BJ (cell line): ENCODE measurements at regions of chr17 and their contacts with region 1.

Region 1: GRCh38 chr17:32486111-32486700 is 587 bp upstream of the CDK5R1 start:
- DNase-seq: no peak
- H3K4me3 ChIP-seq: peak overlapping the region; percentile 51
- H3K27me3 ChIP-seq: no peaks in the 10 kb centered on the region
- CTCF ChIP-seq: no peak

Region 2: GRCh38 chr17:32461853-32462617 is 24.2 kb before region 1 on chr17:
- CTCF ChIA-PET with region 1: interaction called, 37 read pairs
- POLR2A ChIA-PET with region 1: no interaction called
- DNase-seq: no peak
- H3K4me3 ChIP-seq: no peak overlapping the region
- H3K27me3 ChIP-seq: no peaks in the 10 kb centered on the region
- CTCF ChIP-seq: peak; percentile 63

Region 3: GRCh38 chr17:32659419-32659842 is 173.2 kb after region 1 on chr17:
- CTCF ChIA-PET with region 1: interaction called, 13 read pairs
- POLR2A ChIA-PET with region 1: no interaction called
- DNase-seq: peak; percentile 12
- H3K4me3 ChIP-seq: no peak overlapping the region
- H3K27me3 ChIP-seq: no peaks in the 10 kb centered on the region
- CTCF ChIP-seq: peak; percentile 94

Region 4: GRCh38 chr17:32755045-32755805 is 269.0 kb after region 1 on chr17:
- CTCF ChIA-PET with region 1: interaction called, 16 read pairs
- POLR2A ChIA-PET with region 1: no interaction called
- DNase-seq: peak; percentile 27
- H3K4me3 ChIP-seq: no peak overlapping the region
- H3K27me3 ChIP-seq: no peaks in the 10 kb centered on the region; the same call in 1 of the 2 replicates
- CTCF ChIP-seq: peak; percentile 44

Region 5: DNA sequence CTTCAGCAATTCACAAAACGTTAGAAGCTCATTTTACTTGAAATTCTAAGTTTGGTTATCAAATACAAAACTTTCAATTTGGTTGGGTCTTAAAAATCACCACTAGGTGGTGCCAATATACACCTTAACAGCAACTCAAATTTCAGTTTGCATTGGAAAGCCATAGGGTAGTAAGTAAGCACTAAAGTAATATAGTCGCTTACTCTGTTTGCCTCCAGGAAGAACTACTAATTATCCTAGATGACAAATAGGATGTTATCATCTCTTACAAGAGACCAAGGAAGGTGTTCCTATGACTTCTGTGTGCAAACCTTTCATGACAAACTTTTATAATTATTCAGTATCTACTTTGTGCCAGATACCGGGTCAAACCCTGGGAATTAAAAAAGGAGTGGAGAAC is 297.4 kb after region 1 on chr17:
- CTCF ChIA-PET with region 1: interaction called, 12 read pairs
- POLR2A ChIA-PET with region 1: no interaction called
- DNase-seq: no peak
- H3K4me3 ChIP-seq: no peak overlapping the region
- H3K27me3 ChIP-seq: no peaks in the 10 kb centered on the region
- CTCF ChIP-seq: peak; percentile 54